Natural killer cell (primary cell): ENCODE measurements at regions of chr19 and their contacts with region 1.

Region 1: DNA sequence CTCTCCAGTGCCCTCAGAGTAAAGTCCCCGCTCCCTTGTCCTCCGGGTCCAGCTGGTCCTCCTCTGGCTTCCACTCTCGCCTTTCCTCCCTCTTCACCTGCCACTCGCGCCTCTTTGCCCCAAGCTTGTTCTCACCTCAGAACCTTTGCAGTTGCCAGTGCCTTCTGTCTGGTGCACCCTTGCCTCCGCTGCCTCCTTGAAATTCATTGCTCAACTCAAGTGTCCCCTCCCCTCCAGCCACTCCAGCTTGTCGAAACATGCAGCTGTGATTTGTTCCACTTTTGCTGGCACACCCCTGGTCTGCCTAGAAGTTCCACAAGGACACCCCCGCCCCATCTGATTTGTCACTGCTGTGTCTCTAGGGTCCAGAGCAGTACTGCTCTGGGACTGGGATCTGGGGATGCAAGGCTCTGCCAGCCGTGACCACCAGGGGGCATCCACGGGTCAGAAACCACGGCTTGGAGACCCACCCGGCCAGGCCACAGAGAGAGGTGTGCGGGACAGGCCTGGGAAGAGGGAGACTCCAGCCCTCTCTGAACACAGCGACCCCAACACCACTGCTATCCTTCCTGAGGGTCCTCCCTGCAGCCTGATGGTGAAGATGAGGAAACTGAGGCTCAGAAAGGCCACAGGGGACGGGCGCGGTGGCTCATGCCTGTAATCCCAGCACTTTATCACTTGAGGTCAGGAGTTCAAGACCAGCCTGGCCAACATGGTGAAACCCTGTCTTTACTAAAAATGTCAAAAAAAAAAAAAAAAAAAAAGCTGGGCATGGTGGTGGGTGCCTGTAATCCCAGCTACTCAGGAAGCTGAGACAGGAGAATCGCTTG is 49.9 kb downstream of the AP1M1 start:
- DNase-seq: peak; percentile 79 to 91
- ATAC-seq: peak; percentile 86 to 98 (median 97)
- H3K4me3 ChIP-seq: no peak overlapping the region
- H3K4me3 Mint-ChIP-seq: peak overlapping the region; percentile 25
- H3K27ac ChIP-seq: no peak overlapping the region
- H3K27ac Mint-ChIP-seq: peak overlapping the region in 1 of 2 donors; percentile 86
- H3K4me1 ChIP-seq: peaks cover 22% of the 10 kb centered on the region
- H3K4me1 Mint-ChIP-seq: peaks cover 13 to 19% of the 10 kb centered on the region in 2 donors
- H3K27me3 ChIP-seq: no peaks in the 10 kb centered on the region
- H3K27me3 Mint-ChIP-seq: peaks cover 0 to 3% of the 10 kb centered on the region in 2 donors
- CTCF ChIP-seq: peak; percentile 93

Region 2: GRCh38 chr19:16216744-16217670 is 30.6 kb before region 1 on chr19:
- intact Hi-C with region 1: no loop called
- DNase-seq: peak in 1 of 2 donors; percentile 43
- ATAC-seq: no peak
- H3K4me3 ChIP-seq: no peak overlapping the region
- H3K4me3 Mint-ChIP-seq: no peak overlapping the region
- H3K27ac ChIP-seq: no peak overlapping the region
- H3K27ac Mint-ChIP-seq: peak overlapping the region in 1 of 2 donors; percentile 75
- H3K4me1 ChIP-seq: peaks cover 7% of the 10 kb centered on the region
- H3K4me1 Mint-ChIP-seq: peaks cover 43% of the 10 kb centered on the region in 2 donors
- H3K27me3 ChIP-seq: no peaks in the 10 kb centered on the region
- H3K27me3 Mint-ChIP-seq: no peaks in the 10 kb centered on the region
- CTCF ChIP-seq: no peak

Region 3: GRCh38 chr19:16382775-16383543 is 135.4 kb after region 1 on chr19:
- intact Hi-C with region 1: loop called (anchors 1 kb)
- DNase-seq: peak; percentile 73 to 92
- ATAC-seq: peak; percentile 69 to 75 (median 73)
- H3K4me3 ChIP-seq: peak overlapping the region; percentile 8
- H3K4me3 Mint-ChIP-seq: peak overlapping the region; percentile 81
- H3K27ac ChIP-seq: peak overlapping the region; percentile 85
- H3K27ac Mint-ChIP-seq: peak overlapping the region; percentile 90 to 95
- H3K4me1 ChIP-seq: peaks cover 63% of the 10 kb centered on the region
- H3K4me1 Mint-ChIP-seq: peaks cover 39 to 60% of the 10 kb centered on the region in 2 donors
- H3K27me3 ChIP-seq: no peaks in the 10 kb centered on the region
- H3K27me3 Mint-ChIP-seq: no peaks in the 10 kb centered on the region
- CTCF ChIP-seq: peak; percentile 87

Region 4: DNA sequence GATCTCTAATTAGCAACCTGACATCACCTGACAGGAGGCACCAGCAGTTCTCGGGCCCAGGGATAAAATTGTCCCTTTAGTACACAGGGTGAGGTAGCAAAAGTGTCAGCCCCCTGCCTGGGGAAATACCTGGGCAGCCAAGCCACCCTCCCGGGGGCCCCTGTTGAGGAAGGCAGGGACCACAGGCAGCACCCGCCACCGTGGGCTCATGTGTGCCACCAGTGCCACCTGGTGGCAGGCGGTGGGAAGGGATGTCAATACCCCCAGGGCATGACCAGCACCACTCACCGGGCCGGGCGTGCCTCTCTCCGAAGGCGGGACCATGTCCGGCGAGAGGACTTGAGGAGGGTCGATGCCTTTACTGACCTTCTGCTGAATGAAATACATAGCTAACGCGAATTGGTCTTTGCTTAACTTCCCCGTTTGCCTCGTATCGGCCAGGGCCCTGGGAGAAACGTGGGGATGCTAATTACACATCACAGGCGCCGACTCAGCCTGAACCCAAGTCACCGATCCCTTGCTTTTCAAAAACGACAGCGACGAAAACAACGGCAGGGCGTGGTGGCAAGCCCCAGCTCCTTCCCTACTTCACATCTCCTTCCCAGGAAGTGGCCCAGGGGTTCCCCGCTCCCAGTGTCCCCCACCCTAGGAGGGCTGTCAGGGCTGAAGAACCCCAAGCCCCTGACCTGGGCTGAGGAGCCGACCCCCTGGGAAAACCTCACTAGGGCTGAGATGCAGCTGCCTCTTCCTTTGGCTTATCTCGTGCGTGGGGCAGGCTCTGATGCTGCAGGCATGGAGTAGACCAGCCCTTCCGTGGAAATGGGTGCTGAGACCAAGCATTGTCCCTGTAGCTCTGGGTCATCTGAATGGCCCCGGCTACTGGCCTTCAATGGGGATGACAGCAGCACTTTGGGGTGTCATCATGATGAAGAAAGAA is 170.4 kb after region 1 on chr19:
- intact Hi-C with region 1: loop called (anchors 1 kb)
- DNase-seq: peak; percentile 68 to 87
- ATAC-seq: peak; percentile 87 to 99 (median 97)
- H3K4me3 ChIP-seq: no peak overlapping the region
- H3K4me3 Mint-ChIP-seq: no peak overlapping the region
- H3K27ac ChIP-seq: peak overlapping the region; percentile 67
- H3K27ac Mint-ChIP-seq: peak overlapping the region; percentile 59 to 64
- H3K4me1 ChIP-seq: peaks cover 16% of the 10 kb centered on the region
- H3K4me1 Mint-ChIP-seq: peaks cover 7 to 11% of the 10 kb centered on the region in 2 donors
- H3K27me3 ChIP-seq: no peaks in the 10 kb centered on the region
- H3K27me3 Mint-ChIP-seq: no peaks in the 10 kb centered on the region
- CTCF ChIP-seq: peak; percentile 97